ENCODE measurements at regions of chrX and their contacts with region 1.

Region 1: DNA sequence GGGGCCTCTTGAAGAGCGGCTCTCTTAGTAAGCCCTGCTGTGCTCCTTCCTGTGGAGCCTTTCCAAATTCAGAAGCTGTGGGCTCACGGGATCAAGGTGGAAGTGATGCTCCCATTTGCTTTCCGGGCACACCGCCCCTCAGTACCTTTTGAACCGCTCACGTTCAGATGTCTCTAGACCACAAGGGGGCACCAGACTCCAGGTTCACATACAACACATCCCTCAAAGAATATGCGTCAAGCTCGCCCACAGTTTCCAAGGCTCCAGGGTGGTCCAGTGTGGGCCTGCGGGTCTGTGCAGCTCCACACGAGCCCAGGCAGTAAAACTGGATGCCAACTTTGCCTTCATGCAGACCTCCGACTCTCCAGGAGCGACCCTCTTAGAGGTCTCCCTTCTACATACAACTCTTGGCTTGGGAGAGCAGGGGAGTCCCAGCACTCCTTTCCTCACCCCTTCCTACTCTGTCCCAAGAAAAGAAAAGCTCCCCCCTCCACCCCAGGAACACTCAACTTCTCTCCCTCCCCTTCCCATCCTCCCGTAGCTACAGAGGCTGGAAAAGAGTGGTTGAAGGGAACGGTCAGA is 11.0 kb downstream of the SUPT20HL1 start:
- DNase-seq: peak; percentile 74
- ATAC-seq: peak; percentile 67
- H3K4me3 Mint-ChIP-seq: peak overlapping the region; percentile 66
- H3K27ac Mint-ChIP-seq: peak overlapping the region; percentile 85
- H3K4me1 Mint-ChIP-seq: peaks cover 52% of the 10 kb centered on the region
- H3K27me3 Mint-ChIP-seq: peaks cover 18% of the 10 kb centered on the region
- CTCF ChIP-seq: peak; percentile 45; the same call in 1 of the 2 replicates

Region 2: GRCh38 chrX:24294620-24295019 is 76.9 kb before region 1 on chrX:
- CTCF ChIA-PET with region 1: interaction called, 25 read pairs
- POLR2A ChIA-PET with region 1: interaction called, 4 read pairs
- DNase-seq: peak; percentile 57
- ATAC-seq: peak; percentile 63
- H3K4me3 Mint-ChIP-seq: no peak overlapping the region
- H3K27ac Mint-ChIP-seq: no peak overlapping the region
- H3K4me1 Mint-ChIP-seq: peaks cover 19% of the 10 kb centered on the region
- H3K27me3 Mint-ChIP-seq: no peaks in the 10 kb centered on the region
- CTCF ChIP-seq: peak; percentile 20; the same call in 1 of the 2 replicates

Region 3: DNA sequence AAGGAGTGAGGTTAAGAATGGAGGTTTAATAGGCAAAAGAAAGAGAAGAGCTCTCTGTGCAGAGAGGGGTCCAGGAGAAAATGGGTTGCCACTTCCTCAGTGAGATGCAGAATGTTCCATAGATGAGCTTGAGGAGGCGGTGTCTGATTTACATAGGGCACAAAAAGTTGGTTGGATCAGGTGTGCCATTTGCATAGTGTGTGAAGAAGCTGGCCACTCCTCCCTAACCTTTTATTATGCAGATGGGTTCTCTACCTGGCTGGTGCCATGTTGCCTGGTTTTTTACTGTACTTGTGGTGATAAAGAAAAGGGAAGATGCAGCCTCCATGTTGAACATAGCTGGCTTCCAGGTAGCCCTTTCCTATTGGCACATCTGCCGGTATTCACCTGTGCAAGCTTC is 16.2 kb after region 1 on chrX:
- CTCF ChIA-PET with region 1: interaction called, 39 read pairs
- POLR2A ChIA-PET with region 1: interaction called, 8 read pairs
- DNase-seq: no peak
- ATAC-seq: peak; percentile 91
- H3K4me3 Mint-ChIP-seq: 0 out of 2 replicates have a peak overlapping the region, but pooled peaks have one; percentile 16
- H3K27ac Mint-ChIP-seq: peak overlapping the region; percentile 93
- H3K4me1 Mint-ChIP-seq: peaks cover 55% of the 10 kb centered on the region
- H3K27me3 Mint-ChIP-seq: no peaks in the 10 kb centered on the region
- CTCF ChIP-seq: no peak

Region 4: GRCh38 chrX:24395775-24396174 is 24.3 kb after region 1 on chrX:
- CTCF ChIA-PET with region 1: interaction called, 41 read pairs
- POLR2A ChIA-PET with region 1: interaction called, 8 read pairs
- DNase-seq: peak; percentile 16
- ATAC-seq: peak; percentile 66
- H3K4me3 Mint-ChIP-seq: no peak overlapping the region
- H3K27ac Mint-ChIP-seq: no peak overlapping the region
- H3K4me1 Mint-ChIP-seq: peaks cover 30% of the 10 kb centered on the region
- H3K27me3 Mint-ChIP-seq: no peaks in the 10 kb centered on the region
- CTCF ChIP-seq: no peak

Region 5: DNA sequence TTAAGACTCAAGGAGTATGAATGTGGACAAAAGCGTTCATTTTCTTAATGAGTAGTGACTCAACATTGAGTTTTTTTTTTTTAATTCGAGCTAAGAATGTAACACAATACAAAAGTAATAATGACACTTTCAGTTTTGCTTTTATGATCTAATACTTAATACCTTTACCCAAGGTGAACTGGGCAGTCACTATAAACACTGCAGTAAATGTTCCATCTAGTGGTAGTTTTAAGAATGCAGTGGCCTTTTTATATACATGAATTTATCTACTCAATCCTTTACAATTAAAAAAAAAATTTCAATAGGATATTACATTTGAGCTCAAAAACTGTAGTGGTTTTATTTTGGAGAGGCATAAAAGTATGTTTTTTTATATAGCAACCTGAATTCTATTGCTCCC is 127.5 kb after region 1 on chrX:
- CTCF ChIA-PET with region 1: interaction called, 39 read pairs
- POLR2A ChIA-PET with region 1: no interaction called
- DNase-seq: no peak
- ATAC-seq: no peak
- H3K4me3 Mint-ChIP-seq: no peak overlapping the region
- H3K27ac Mint-ChIP-seq: no peak overlapping the region
- H3K4me1 Mint-ChIP-seq: peaks cover 33% of the 10 kb centered on the region
- H3K27me3 Mint-ChIP-seq: no peaks in the 10 kb centered on the region
- CTCF ChIP-seq: no peak

Measured in WTC11 (cell line).